Prostate gland (tissue), 2 donors: ENCODE measurements at regions of chr3 and their contacts with region 1.

Region 1: DNA sequence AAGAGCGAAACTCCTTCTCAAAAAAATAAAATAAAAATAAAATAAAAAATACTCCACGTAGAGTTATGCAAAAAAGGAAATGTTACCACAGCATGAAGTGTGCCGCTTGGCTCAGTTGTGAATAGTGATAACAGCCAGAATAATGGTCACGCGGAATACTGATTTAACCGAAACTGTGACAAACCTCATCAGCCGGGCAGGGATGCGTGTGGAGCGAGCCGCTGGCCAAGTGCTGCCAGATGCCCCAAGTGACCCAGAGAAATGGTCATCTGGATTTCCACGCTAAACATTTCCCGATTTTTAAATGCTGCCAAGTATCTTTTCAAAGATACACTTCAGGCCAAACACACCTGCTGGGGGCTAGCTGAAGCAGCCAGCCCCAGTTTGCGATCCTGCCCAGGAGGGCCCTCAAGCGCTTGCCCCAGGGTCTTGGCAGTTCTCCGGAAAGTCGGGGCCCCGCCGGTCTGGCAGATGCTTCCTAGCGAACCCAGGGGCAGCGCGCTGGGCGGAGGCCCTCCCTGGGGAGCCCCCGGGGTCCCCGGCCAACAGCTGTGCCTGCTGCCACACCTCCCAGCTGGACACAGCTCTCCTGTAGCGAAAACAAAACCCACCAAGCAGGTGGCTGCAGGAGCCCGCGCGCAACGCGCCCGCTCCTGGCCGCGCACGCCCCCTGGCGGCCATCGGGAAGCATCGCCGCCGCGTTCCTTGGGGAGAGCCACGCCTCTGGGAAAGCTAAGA is 35.1 kb downstream of the CMTM6 start:
- DNase-seq: peak; percentile 58
- H3K4me3 ChIP-seq: peak overlapping the region; percentile 26 to 32
- H3K27ac ChIP-seq: no peak overlapping the region
- H3K4me1 ChIP-seq: no peaks in the 10 kb centered on the region
- H3K27me3 ChIP-seq: no peaks in the 10 kb centered on the region
- CTCF ChIP-seq: peak; percentile 94 to 97 (median 96)
- POLR2A ChIP-seq: no peak

Region 2: GRCh38 chr3:32374788-32375595 is 92.5 kb before region 1 on chr3:
- intact Hi-C with region 1: loop called (anchors 2 kb)
- DNase-seq: peak; percentile 77
- H3K4me3 ChIP-seq: no peak overlapping the region
- H3K27ac ChIP-seq: no peak overlapping the region
- H3K4me1 ChIP-seq: no peaks in the 10 kb centered on the region
- H3K27me3 ChIP-seq: no peaks in the 10 kb centered on the region
- CTCF ChIP-seq: peak; percentile 53 to 79 (median 70)
- POLR2A ChIP-seq: no peak

Region 3: GRCh38 chr3:32391643-32392535 is 75.6 kb before region 1 on chr3 and contains the start of gene CMTM7:
- intact Hi-C with region 1: loop called (anchors 5 kb)
- DNase-seq: peak; percentile 59
- H3K4me3 ChIP-seq: peak within 1 kb of the TSS; percentile 64 to 68
- H3K27ac ChIP-seq: peak within 1 kb of the TSS; percentile 62 to 71
- H3K4me1 ChIP-seq: no peaks in the 10 kb centered on the region
- H3K27me3 ChIP-seq: no peaks in the 10 kb centered on the region
- CTCF ChIP-seq: peak in 1 of 4 experiments; percentile 1
- POLR2A ChIP-seq: peak; percentile 78
- total RNA-seq, gene CMTM7: 15.6 to 33.1 TPM